ENCODE measurements at regions of chr7 and their contacts with region 1.

Region 1: DNA sequence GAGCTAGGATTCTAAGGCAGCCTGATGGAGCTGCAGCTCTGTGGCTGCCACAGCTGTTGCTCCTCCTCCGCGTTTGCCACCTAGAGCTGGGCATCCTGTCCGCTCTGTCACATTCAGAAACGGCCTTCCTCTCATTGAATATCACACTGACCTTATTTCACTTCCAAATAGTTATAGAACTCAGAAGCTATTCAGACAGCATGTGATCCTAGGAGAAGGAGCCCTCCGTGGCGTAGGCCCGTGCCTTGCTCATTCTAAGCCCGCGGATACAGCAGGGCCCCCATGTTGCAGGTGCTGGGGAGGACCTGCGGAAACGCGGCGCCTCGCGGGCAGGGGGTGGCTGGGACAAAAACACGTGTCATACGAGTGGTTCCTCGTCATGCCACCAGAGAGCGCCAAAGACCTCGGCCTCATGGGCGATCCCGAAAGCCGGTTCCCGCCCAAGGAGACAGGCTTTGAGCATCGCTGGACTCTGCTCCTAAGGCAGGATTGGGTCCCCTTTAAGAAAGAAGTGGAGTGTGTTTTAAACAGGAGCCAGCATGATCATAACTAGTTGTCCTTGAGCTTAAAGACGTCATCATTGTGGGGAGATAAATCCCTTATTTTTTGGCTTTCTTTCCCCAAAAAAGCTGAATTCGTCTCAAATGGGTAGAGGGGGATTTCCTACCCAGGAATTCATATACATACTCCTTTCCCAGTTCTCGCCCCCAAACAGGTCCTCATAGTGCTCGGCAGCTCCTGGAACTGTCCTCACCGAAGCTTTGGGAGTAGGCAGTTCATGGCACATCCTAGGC is 17.9 kb upstream of the FIGNL1 start:
- DNase-seq: peak; percentile 96
- H3K4me3 ChIP-seq: peak overlapping the region in 2 of 4 donors; percentile 5 to 42
- H3K27ac ChIP-seq: no peak overlapping the region
- H3K4me1 ChIP-seq: peaks cover 4 to 10% (median 9%) of the 10 kb centered on the region in 4 donors
- H3K27me3 ChIP-seq: peaks cover 0 to 7% (median 0%) of the 10 kb centered on the region in 4 donors
- CTCF ChIP-seq: peak; percentile 88 to 96 (median 89)
- EP300 ChIP-seq: no peak
- POLR2A ChIP-seq: no peak

Region 2: GRCh38 chr7:50552921-50553320 is 84.9 kb after region 1 on chr7:
- intact Hi-C with region 1: loop called (anchors 5 kb)
- DNase-seq: no peak
- H3K4me3 ChIP-seq: no peak overlapping the region
- H3K27ac ChIP-seq: no peak overlapping the region
- H3K4me1 ChIP-seq: peaks cover 0 to 11% (median 5%) of the 10 kb centered on the region in 4 donors
- H3K27me3 ChIP-seq: peaks cover 0 to 12% (median 0%) of the 10 kb centered on the region in 4 donors
- CTCF ChIP-seq: no peak
- EP300 ChIP-seq: no peak
- POLR2A ChIP-seq: no peak

Region 3: DNA sequence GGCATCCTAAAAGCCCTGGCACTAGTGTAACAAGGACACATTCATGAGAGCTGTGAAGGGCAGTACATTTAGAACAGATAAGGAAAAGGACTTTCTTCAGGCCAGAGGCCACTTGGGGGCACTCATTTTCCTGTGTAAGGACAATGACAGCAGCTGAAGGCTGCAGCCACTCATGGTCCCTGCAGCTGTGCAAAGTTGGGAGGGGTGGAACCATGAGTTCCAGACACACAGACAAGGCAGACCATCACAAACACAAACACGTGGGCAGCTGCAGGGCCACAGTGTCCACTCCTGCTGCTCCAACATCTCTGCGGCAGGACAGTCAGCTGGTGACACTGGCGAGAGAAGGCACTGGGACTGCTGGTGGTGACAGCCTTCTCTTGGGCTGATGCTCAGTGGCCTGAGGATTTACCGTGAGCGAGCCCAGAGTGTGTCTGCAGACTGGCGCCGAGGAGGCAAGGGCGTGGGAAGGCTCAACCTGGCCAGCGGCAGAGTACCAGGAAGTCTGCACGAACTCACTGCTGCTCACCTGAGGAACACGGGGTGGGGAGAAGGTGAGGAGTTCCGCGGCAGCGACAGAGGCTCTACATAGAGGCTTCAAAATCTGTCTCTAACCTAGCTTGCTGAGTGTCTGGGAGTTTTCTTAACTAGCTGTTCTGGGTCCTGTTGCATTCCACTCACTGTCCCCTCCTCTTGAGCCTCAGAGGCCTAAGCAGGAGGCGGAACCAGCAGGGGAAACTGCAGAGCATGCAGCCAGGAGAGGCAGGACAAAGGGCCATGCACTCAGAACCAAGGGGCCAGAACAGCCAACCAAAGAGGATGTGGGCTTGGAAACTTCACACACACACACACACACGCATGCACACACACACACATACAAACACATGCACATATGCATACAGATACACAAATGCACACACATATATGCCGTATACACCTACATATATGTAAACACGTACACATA is 173.7 kb after region 1 on chr7:
- intact Hi-C with region 1: no loop called
- DNase-seq: no peak
- H3K4me3 ChIP-seq: no peak overlapping the region
- H3K27ac ChIP-seq: no peak overlapping the region
- H3K4me1 ChIP-seq: peaks cover 0 to 5% (median 2%) of the 10 kb centered on the region in 4 donors
- H3K27me3 ChIP-seq: no peaks in the 10 kb centered on the region
- CTCF ChIP-seq: peak in 1 of 3 experiments; percentile 5
- EP300 ChIP-seq: no peak
- POLR2A ChIP-seq: no peak

Region 4: GRCh38 chr7:50679218-50680007 is 211.4 kb after region 1 on chr7:
- intact Hi-C with region 1: loop called (anchors 2 kb)
- DNase-seq: no peak
- H3K4me3 ChIP-seq: no peak overlapping the region
- H3K27ac ChIP-seq: no peak overlapping the region
- H3K4me1 ChIP-seq: peaks cover 60 to 80% (median 76%) of the 10 kb centered on the region in 4 donors
- H3K27me3 ChIP-seq: no peaks in the 10 kb centered on the region
- CTCF ChIP-seq: peak; percentile 37 to 57 (median 46)
- EP300 ChIP-seq: no peak
- POLR2A ChIP-seq: no peak

Region 5: GRCh38 chr7:50782384-50783208 is 314.6 kb after region 1 on chr7 and contains the start of gene GRB10:
- intact Hi-C with region 1: no loop called
- DNase-seq: no peak
- H3K4me3 ChIP-seq: peak within 1 kb of the TSS; percentile 62 to 69 (median 63)
- H3K27ac ChIP-seq: peak within 1 kb of the TSS; percentile 39 to 73 (median 66)
- H3K4me1 ChIP-seq: peaks cover 30 to 67% (median 63%) of the 10 kb centered on the region in 4 donors
- H3K27me3 ChIP-seq: no peaks in the 10 kb centered on the region
- CTCF ChIP-seq: peak; percentile 30 to 51 (median 31)
- EP300 ChIP-seq: no peak
- POLR2A ChIP-seq: no peak
- total RNA-seq, gene GRB10: 54.0 to 69.1 (median 61.6) TPM

Region 6: DNA sequence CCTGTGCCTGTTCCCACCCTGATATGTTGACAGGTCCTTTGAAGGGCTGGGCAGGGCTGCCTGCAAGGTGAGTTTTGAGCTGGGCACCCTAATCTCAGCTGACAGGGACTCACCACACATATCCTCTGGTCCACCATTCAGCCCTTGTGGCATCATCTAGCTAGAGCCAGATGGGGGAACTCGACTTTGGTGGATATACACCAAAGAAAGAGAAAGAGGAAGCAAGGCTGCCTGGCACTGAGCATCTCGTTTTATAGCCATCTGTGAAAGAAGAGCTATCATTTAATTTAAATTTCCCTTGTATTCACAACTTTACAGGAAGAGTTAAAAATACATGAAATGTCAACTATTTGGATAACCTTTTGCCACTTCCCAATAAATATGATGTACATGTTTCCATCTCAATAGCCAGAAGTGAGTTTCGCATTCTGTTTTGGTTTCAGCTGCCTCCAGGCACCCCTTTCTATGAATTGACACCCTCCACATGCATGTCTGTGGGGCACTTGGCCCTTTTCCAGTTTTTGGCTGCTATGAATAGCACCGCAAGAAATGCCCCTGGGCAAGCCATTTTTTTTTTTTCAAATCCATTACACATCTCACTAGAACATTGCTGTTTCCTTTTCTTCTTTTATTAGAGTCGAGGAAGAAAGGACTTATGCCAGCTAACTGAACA is 337.6 kb after region 1 on chr7:
- intact Hi-C with region 1: loop called (anchors 10 kb)
- DNase-seq: no peak
- H3K4me3 ChIP-seq: no peak overlapping the region
- H3K27ac ChIP-seq: no peak overlapping the region
- H3K4me1 ChIP-seq: no peaks in the 10 kb centered on the region
- H3K27me3 ChIP-seq: peaks cover 0 to 15% (median 0%) of the 10 kb centered on the region in 4 donors
- CTCF ChIP-seq: no peak
- EP300 ChIP-seq: no peak
- POLR2A ChIP-seq: no peak

Region 7: GRCh38 chr7:51067757-51068156 is 599.7 kb after region 1 on chr7:
- intact Hi-C with region 1: loop called (anchors 10 kb)
- DNase-seq: peak; percentile 92
- H3K4me3 ChIP-seq: no peak overlapping the region
- H3K27ac ChIP-seq: peak overlapping the region in 2 of 4 donors; percentile 23 to 32
- H3K4me1 ChIP-seq: peaks cover 16 to 50% (median 39%) of the 10 kb centered on the region in 4 donors
- H3K27me3 ChIP-seq: no peaks in the 10 kb centered on the region
- CTCF ChIP-seq: peak; percentile 53 to 77 (median 65)
- EP300 ChIP-seq: no peak
- POLR2A ChIP-seq: no peak

Region 8: DNA sequence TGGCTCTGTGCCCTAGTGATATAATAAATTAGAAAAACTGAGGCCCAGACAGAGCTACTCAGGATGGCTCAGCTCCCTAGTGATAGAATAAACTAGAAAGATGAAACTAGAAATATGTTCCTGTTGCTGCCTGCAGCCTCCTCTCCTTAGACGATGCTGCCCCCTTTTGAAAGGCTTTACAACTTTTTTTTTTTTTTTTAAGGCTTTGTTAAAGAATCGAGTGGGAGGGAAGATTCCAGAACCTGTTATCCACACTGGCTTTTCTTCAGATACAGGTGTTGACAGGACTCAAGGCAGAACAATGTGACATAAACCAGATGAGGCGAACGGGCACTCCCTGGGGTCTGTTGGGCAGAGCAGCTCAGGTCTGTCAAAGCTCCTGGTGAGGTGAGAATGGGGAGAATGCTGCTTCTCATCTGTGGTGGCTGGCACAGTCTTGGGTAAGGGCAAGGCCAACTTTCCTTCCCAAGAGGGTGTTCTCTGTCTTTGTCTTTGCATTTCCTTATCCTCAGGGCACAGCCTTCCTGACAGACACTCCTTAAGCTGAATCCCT is 673.5 kb after region 1 on chr7:
- intact Hi-C with region 1: loop called (anchors 5 kb)
- DNase-seq: peak; percentile 83
- H3K4me3 ChIP-seq: no peak overlapping the region
- H3K27ac ChIP-seq: peak overlapping the region in 2 of 4 donors; percentile 15 to 18
- H3K4me1 ChIP-seq: peaks cover 21 to 42% (median 33%) of the 10 kb centered on the region in 4 donors
- H3K27me3 ChIP-seq: no peaks in the 10 kb centered on the region
- CTCF ChIP-seq: peak; percentile 55 to 66 (median 66)
- EP300 ChIP-seq: no peak
- POLR2A ChIP-seq: no peak

Region 9: GRCh38 chr7:51162724-51163329 is 694.8 kb after region 1 on chr7:
- intact Hi-C with region 1: loop called (anchors 2 kb)
- DNase-seq: peak; percentile 94
- H3K4me3 ChIP-seq: no peak overlapping the region
- H3K27ac ChIP-seq: no peak overlapping the region
- H3K4me1 ChIP-seq: peaks cover 6 to 18% (median 15%) of the 10 kb centered on the region in 4 donors
- H3K27me3 ChIP-seq: no peaks in the 10 kb centered on the region
- CTCF ChIP-seq: peak; percentile 72 to 82 (median 82)
- EP300 ChIP-seq: no peak
- POLR2A ChIP-seq: no peak